ENCODE measurements at regions of chr3 and their contacts with region 1.

Region 1: DNA sequence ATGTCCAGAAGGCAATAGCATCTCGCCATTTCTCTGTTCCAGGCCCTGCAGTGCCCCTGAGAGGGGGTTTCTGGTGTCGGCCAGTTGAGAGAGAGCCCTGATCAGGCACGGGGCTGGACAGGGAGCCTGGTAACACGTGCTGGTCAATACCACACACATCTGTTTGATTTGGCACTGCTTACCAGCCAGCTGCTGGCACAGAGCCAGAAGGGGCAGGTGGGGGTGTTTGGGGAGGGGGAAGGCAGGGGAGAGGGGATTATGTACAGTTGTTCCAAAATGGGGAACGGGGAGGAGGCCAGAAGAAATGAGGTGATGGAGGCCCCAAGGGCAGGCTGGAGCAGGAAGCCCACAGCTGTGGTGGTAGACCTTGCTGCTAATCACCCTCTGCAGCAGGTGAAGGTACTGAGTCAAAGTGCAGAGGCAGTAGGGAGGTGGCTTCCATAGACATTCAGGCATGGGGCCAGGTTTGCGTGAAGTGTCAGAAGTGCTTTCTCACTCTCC is 153.5 kb upstream of the LPP start:
- DNase-seq: no peak
- ATAC-seq: peak; percentile 25
- H3K4me3 ChIP-seq: no peak overlapping the region
- H3K4me3 Mint-ChIP-seq: no peak overlapping the region
- H3K27ac ChIP-seq: peak overlapping the region in 1 of 2 donors; percentile 50
- H3K27ac Mint-ChIP-seq: peak overlapping the region; percentile 50
- H3K4me1 ChIP-seq: peaks cover 13 to 14% of the 10 kb centered on the region in 2 donors
- H3K4me1 Mint-ChIP-seq: peaks cover 25% of the 10 kb centered on the region
- H3K27me3 ChIP-seq: no peaks in the 10 kb centered on the region
- H3K27me3 Mint-ChIP-seq: no peaks in the 10 kb centered on the region
- CTCF ChIP-seq: no peak

Region 2: GRCh38 chr3:187870360-187871203 is 129.8 kb before region 1 on chr3:
- CTCF ChIA-PET with region 1: no interaction called
- POLR2A ChIA-PET with region 1: no interaction called
- intact Hi-C with region 1: no loop called
- DNase-seq: no peak
- ATAC-seq: no peak
- H3K4me3 ChIP-seq: no peak overlapping the region
- H3K4me3 Mint-ChIP-seq: no peak overlapping the region
- H3K27ac ChIP-seq: no peak overlapping the region
- H3K27ac Mint-ChIP-seq: no peak overlapping the region
- H3K4me1 ChIP-seq: no peaks in the 10 kb centered on the region
- H3K4me1 Mint-ChIP-seq: no peaks in the 10 kb centered on the region
- H3K27me3 ChIP-seq: no peaks in the 10 kb centered on the region
- H3K27me3 Mint-ChIP-seq: no peaks in the 10 kb centered on the region
- CTCF ChIP-seq: no peak

Region 3: DNA sequence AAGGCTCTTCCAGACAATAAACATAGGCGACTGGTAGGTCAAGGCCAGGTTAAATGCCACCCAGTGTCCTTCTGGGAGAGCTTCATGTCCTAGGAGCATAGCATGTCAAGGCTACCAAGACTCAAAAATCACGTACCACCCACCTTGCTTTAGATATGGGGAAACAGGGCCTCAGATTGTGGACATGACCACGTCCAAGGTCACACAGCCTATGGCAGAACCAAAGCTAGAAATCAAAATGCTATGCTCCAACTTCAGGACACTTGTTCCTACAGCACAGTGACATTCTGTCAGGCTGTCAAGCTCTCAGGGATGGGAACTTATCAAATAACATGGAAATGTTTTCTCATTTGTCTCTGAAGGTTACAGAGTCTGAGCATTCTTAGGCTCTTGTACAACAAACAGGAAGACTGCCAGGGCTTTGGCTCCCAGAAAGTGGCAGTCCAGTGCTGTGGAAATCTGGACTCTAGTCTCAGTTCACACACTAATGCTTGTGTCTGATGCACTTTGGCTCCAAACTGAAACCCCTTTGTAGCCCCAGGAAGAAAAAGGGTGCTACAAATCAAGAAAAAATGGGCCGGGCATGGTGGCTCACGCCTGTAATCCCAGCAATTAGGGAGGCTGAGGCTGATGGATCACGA is 16.8 kb before region 1 on chr3:
- CTCF ChIA-PET with region 1: no interaction called
- POLR2A ChIA-PET with region 1: interaction called, 3 read pairs
- intact Hi-C with region 1: loop called (anchors 2 kb)
- DNase-seq: no peak
- ATAC-seq: no peak
- H3K4me3 ChIP-seq: no peak overlapping the region
- H3K4me3 Mint-ChIP-seq: no peak overlapping the region
- H3K27ac ChIP-seq: no peak overlapping the region
- H3K27ac Mint-ChIP-seq: no peak overlapping the region
- H3K4me1 ChIP-seq: peaks cover 29 to 39% of the 10 kb centered on the region in 2 donors
- H3K4me1 Mint-ChIP-seq: peaks cover 46% of the 10 kb centered on the region
- H3K27me3 ChIP-seq: peaks cover 0 to 10% (median 4%) of the 10 kb centered on the region in 4 experiments
- H3K27me3 Mint-ChIP-seq: peaks cover 25% of the 10 kb centered on the region
- CTCF ChIP-seq: no peak

Region 4: GRCh38 chr3:188205992-188206416 is 205.6 kb after region 1 on chr3:
- CTCF ChIA-PET with region 1: no interaction called
- POLR2A ChIA-PET with region 1: no interaction called
- intact Hi-C with region 1: no loop called
- DNase-seq: no peak
- ATAC-seq: no peak
- H3K4me3 ChIP-seq: no peak overlapping the region
- H3K4me3 Mint-ChIP-seq: no peak overlapping the region
- H3K27ac ChIP-seq: no peak overlapping the region
- H3K27ac Mint-ChIP-seq: no peak overlapping the region
- H3K4me1 ChIP-seq: no peaks in the 10 kb centered on the region
- H3K4me1 Mint-ChIP-seq: peaks cover 22% of the 10 kb centered on the region
- H3K27me3 ChIP-seq: no peaks in the 10 kb centered on the region
- H3K27me3 Mint-ChIP-seq: no peaks in the 10 kb centered on the region
- CTCF ChIP-seq: no peak

Region 5: DNA sequence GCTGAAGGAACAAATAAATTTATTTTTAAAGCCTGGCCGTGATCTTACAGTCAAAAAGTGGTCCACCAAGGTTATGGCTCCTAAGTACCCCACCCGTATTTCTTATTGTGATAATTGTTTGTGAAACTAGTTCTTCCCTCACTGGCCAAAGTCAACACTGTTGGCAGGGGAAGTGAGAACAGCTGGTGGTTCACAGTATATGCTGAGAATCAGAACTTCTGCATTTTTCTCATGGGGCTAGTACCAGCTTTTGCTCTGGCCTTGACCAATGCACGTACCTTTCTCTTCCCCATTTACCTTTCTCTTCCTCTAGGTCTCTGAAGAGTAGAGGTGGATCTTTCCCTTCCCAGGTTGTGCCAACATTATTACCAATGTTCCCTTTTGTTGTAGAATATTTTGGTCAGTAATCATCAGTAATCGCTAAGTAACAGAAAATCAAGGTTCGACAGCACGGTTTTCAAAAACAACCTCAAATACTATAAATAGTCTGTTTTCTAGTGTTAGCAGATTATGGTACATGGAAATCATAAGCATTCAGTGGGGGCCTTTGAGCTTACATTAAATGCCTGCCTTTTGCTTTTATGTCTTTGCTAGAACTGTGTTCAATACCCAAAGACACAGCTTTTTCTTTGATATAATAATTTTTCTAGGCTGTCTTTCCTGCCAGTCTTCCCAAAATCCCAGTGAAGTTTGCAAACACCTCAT is 421.6 kb after region 1 on chr3:
- CTCF ChIA-PET with region 1: no interaction called
- POLR2A ChIA-PET with region 1: no interaction called
- intact Hi-C with region 1: no loop called
- DNase-seq: peak; percentile 89
- ATAC-seq: peak; percentile 95
- H3K4me3 ChIP-seq: peak overlapping the region in 1 of 5 experiments; percentile 47
- H3K4me3 Mint-ChIP-seq: peak overlapping the region; percentile 74
- H3K27ac ChIP-seq: peak overlapping the region; percentile 89 to 94
- H3K27ac Mint-ChIP-seq: peak overlapping the region; percentile 98
- H3K4me1 ChIP-seq: peaks cover 59 to 72% of the 10 kb centered on the region in 2 donors
- H3K4me1 Mint-ChIP-seq: peaks cover 90% of the 10 kb centered on the region
- H3K27me3 ChIP-seq: no peaks in the 10 kb centered on the region
- H3K27me3 Mint-ChIP-seq: no peaks in the 10 kb centered on the region
- CTCF ChIP-seq: no peak